Activated CD4-positive, alpha-beta T cell treated with anti-CD3 and anti-CD28 coated beads for 36 hours (primary cell): ENCODE measurements at regions of chr1 and their contacts with region 1.

Region 1: DNA sequence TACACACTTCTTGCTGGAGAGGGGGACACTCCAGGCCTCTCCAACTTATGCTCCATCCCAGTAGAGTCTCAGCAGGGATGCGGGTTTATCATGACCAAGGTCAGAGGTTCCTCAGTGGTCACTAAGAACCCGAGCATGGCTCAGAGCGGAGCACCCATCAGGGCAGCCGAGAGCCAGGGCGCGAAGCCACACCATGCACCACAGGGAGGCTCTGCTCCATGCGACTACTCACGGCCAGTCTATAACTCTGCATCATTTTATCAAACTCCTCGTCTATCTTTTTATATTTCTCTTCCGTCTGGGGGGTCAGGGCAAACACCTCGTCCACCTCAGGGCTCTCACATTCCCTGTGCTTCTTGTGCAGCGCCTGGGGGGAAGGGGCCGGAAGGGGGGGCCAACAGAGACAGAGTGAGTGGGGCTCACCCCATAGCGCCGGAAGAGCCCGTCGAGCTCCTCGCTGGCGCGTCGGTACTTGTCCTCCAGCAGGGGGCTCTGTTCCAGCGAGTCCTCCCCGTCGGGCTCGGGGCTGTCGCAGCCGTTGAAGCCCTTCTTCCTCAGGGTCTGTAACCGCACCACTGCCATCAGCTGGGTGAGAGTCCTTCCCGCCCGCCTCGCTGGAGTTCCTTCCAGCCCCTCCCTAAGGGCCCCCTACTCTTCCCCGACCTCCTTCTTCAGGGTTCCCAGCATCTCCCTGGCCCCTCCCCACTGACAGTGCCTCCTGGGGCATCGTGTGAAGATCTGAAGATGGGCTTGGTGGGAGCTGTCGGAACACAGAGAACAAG is 20.0 kb downstream of the MEF2D start:
- DNase-seq: peak; percentile 89
- ATAC-seq: peak; percentile 82
- H3K4me3 Mint-ChIP-seq: peak overlapping the region; percentile 25
- H3K27ac Mint-ChIP-seq: peak overlapping the region; percentile 72
- H3K4me1 Mint-ChIP-seq: peaks cover 64% of the 10 kb centered on the region
- H3K27me3 Mint-ChIP-seq: no peaks in the 10 kb centered on the region

Region 2: DNA sequence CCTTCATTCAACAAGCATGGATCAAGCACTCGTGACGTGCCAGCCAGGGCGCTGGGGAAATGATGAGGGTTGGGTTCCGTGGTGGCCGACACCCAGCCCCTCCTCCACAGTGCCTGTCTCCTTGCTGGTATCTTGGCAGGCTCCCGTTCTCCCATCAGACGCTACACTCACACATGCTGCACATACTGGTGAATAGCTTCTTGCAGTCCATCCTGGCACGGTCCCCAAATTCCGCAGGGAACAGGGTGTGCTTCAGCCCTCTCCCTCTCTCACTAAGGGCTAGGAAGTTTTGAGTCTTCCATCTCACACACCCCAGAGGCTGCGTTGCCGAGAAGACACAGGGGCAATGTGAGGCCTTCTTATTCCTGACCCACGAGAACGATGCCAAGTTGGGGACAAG is 30.1 kb after region 1 on chr1:
- CTCF ChIA-PET with region 1: interaction called, 17 read pairs
- POLR2A ChIA-PET with region 1: no interaction called
- intact Hi-C with region 1: no loop called
- DNase-seq: no peak
- ATAC-seq: no peak
- H3K4me3 Mint-ChIP-seq: no peak overlapping the region
- H3K27ac Mint-ChIP-seq: no peak overlapping the region
- H3K4me1 Mint-ChIP-seq: peaks cover 44% of the 10 kb centered on the region
- H3K27me3 Mint-ChIP-seq: no peaks in the 10 kb centered on the region

Region 3: GRCh38 chr1:156524481-156524869 is 43.9 kb after region 1 on chr1:
- CTCF ChIA-PET with region 1: interaction called, 12 read pairs
- POLR2A ChIA-PET with region 1: no interaction called
- intact Hi-C with region 1: no loop called
- DNase-seq: peak; percentile 34
- ATAC-seq: peak; percentile 82
- H3K4me3 Mint-ChIP-seq: no peak overlapping the region
- H3K27ac Mint-ChIP-seq: peak overlapping the region; percentile 40
- H3K4me1 Mint-ChIP-seq: peaks cover 30% of the 10 kb centered on the region
- H3K27me3 Mint-ChIP-seq: no peaks in the 10 kb centered on the region

Region 4: DNA sequence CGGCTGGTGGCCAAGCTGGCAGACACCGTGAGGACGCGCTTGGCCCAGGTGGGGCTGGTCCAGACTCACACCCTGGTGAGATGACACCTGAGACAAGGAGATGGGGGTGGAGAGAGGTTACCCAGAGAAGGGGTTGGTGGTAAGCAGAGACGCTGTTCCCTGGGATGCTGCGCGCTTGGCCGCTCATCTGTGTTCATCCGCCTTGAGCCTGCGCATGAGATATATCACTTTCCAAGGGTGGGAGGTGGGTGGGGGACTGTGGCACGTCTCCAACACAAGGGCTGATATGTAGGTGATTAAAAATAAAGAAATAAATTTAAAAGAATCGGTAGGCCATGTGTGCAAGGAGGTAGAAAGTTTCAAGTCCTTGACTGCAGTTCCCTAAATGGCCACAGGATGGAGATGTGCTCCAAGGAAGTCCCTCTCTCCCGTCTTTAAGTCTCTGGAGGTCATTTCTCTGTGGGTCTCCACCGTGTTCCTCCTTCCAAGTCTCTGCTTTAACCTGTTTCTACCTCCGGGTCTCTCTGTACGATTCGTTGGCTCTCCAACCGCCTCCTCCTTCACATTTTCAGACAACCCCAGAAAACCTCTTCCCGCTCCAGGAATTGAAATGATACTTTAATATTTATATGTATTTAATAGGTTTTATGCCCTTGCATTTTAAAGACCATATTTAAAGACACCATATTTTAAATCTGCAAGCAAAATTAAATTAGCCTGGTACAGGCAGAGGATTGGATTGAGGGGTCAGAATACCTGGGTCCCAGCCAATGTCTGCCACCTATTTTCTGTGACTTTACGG is 103.4 kb after region 1 on chr1:
- CTCF ChIA-PET with region 1: interaction called, 8 read pairs
- POLR2A ChIA-PET with region 1: no interaction called
- intact Hi-C with region 1: loop called in 1 of 2 experiments (anchors 5 kb)
- DNase-seq: peak; percentile 88
- ATAC-seq: peak; percentile 43
- H3K4me3 Mint-ChIP-seq: peak overlapping the region; percentile 74
- H3K27ac Mint-ChIP-seq: peak overlapping the region; percentile 51
- H3K4me1 Mint-ChIP-seq: peaks cover 27% of the 10 kb centered on the region
- H3K27me3 Mint-ChIP-seq: no peaks in the 10 kb centered on the region

Region 5: DNA sequence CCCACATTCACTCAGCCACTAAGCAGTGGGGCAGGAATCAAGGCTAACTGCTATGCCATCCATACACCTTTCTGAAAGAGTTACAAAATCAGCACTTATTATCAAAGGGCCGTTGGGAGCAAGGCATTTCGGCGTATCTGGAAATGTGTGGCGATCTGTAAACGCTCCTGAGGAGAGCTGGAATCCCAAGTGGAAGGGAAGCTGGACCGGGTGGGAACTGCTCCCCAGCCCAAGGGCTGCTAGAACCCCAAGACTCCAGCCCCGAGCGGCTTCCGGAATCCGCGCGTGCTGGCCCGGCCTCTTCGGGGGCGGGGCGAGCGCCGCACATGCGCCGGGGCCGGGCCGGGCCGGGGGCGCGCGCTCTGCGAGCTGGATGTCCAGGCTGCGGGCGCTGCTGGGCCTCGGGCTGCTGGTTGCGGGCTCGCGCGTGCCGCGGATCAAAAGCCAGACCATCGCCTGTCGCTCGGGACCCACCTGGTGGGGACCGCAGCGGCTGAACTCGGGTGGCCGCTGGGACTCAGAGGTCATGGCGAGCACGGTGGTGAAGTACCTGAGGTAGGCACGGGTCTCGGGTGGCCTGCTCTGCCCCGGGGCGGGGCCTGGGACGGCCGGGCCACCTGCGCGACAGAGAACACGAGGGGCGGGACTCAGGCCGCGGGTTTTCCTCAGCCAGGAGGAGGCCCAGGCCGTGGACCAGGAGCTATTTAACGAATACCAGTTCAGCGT is 111.0 kb after region 1 on chr1 and contains the start of gene NAXE:
- CTCF ChIA-PET with region 1: interaction called, 8 read pairs
- POLR2A ChIA-PET with region 1: no interaction called
- intact Hi-C with region 1: loop called in 1 of 2 experiments (anchors 5 kb)
- DNase-seq: peak; percentile 82
- ATAC-seq: peak; percentile 94
- H3K4me3 Mint-ChIP-seq: peak within 1 kb of the TSS; percentile 80
- H3K27ac Mint-ChIP-seq: peak within 1 kb of the TSS; percentile 93
- H3K4me1 Mint-ChIP-seq: peaks cover 24% of the 10 kb centered on the region
- H3K27me3 Mint-ChIP-seq: no peaks in the 10 kb centered on the region
- total RNA-seq, gene NAXE: 79.9 to 82.0 TPM

Region 6: GRCh38 chr1:156601122-156601830 is 120.7 kb after region 1 on chr1 and contains the start of gene GPATCH4:
- CTCF ChIA-PET with region 1: interaction called, 7 read pairs
- POLR2A ChIA-PET with region 1: no interaction called
- intact Hi-C with region 1: loop called in 1 of 2 experiments (anchors 2 kb)
- DNase-seq: peak; percentile 89
- ATAC-seq: peak; percentile 76
- H3K4me3 Mint-ChIP-seq: peak within 1 kb of the TSS; percentile 97
- H3K27ac Mint-ChIP-seq: peak within 1 kb of the TSS; percentile 99
- H3K4me1 Mint-ChIP-seq: peaks cover 45% of the 10 kb centered on the region
- H3K27me3 Mint-ChIP-seq: no peaks in the 10 kb centered on the region
- total RNA-seq, gene GPATCH4: 38.5 to 48.7 TPM

Region 7: DNA sequence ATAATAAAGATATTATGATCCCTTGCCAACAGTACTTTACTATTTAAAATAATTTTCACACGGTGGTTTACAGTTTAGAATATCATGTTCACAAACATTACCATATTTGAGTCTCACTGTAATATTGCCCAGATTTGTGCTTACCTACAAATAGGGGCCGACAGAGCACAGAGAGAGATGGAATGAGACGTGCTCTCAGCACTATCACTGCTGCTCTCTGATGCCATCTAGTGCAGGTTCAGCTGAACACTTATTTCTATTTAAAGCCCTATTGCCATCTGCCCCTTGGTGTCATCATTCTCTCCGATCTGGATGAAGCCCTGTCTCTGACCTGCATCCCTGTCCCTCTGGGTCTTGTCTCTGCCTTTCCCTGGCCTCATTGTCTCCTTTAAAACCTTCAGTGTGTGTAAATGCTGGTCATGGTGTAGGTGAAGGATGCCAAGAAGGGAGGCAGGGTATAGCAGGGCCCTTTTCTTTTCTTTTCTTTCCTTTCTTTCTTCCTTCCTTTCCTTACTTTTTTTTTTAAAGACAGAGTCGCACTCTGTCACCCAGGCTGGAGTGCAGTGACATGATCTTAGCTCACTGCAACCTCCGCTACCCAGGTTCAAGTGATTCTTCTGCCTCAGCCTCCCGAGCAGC is 127.6 kb after region 1 on chr1:
- CTCF ChIA-PET with region 1: interaction called, 7 read pairs
- POLR2A ChIA-PET with region 1: no interaction called
- intact Hi-C with region 1: loop called (anchors 1 to 2 kb)
- DNase-seq: peak; percentile 78
- ATAC-seq: peak; percentile 98
- H3K4me3 Mint-ChIP-seq: no peak overlapping the region
- H3K27ac Mint-ChIP-seq: no peak overlapping the region
- H3K4me1 Mint-ChIP-seq: peaks cover 8% of the 10 kb centered on the region
- H3K27me3 Mint-ChIP-seq: peaks cover 9% of the 10 kb centered on the region